ENCODE measurements at regions of chr3 and their contacts with region 1.

Region 1: DNA sequence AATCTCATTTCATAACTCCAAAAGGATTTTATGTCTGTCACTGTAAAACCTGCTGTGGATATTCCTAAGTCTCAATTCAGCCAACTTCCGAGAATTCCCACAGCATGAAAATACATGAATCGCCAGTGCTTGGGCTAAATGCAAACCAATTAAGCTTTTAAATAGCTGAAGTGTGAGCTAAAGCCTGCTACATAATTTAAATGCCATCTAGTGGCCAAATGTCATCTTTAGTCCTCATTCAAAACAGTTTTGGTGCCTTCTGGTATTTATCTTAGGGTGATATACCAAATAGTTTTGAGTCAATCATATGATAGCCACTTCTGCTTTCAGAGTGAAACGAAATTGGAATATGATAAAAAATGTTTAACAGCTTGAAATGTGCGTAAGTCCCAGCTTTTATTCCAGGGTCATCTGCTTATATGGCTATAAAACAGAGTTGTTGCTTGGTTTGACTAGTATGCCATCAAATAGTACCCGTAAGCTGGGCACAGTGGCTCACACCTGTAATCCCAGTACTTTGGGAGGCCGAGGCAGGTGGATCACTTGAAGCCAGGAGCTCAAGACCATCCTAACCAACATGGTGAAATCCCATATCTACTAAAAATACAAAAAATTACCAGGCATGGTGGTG is 41.8 kb upstream of the CCNL1 start:
- DNase-seq: peak; percentile 45

Region 2: GRCh38 chr3:157493627-157494550 is 292.1 kb after region 1 on chr3:
- in situ Hi-C with region 1: loop called (anchors 25 kb)
- DNase-seq: peak; percentile 48

Region 3: GRCh38 chr3:157631478-157631877 is 429.7 kb after region 1 on chr3:
- in situ Hi-C with region 1: no loop called
- DNase-seq: no peak

Measured in ACHN (cell line).